WTC11 (cell line): ENCODE measurements at regions of chr6 and their contacts with region 1.

Region 1: GRCh38 chr6:143026696-143027449 is 33.8 kb upstream of the AIG1 start:
- DNase-seq: peak; percentile 62
- ATAC-seq: peak; percentile 93
- H3K4me3 Mint-ChIP-seq: no peak overlapping the region
- H3K27ac Mint-ChIP-seq: no peak overlapping the region
- H3K4me1 Mint-ChIP-seq: no peaks in the 10 kb centered on the region
- H3K27me3 Mint-ChIP-seq: no peaks in the 10 kb centered on the region
- CTCF ChIP-seq: peak; percentile 36; the same call in 1 of the 2 replicates

Region 2: DNA sequence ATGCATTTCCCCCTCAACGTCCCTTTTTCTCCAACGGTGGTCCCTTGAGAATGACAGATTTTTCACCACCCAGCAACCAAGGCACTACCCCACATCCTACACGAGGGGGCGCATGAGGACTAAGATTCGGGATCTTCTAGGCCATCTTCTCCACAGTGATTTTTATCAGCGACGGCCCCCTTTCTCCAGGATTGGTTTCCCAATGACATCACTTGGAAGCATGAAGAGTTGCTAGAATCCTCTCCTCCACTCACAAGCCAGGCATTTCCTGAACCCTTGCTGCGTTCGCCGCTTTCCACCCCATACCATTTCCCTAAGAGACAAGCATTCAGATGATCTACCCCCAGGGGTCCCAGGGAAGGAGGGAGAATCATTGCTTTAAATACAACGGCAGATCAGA is 333.9 kb before region 1 on chr6:
- CTCF ChIA-PET with region 1: interaction called, 14 read pairs
- POLR2A ChIA-PET with region 1: no interaction called
- DNase-seq: peak; percentile 71
- ATAC-seq: peak; percentile 92
- H3K4me3 Mint-ChIP-seq: peak overlapping the region; percentile 30; the same call in 1 of the 2 replicates
- H3K27ac Mint-ChIP-seq: peak overlapping the region; percentile 39; the same call in 1 of the 2 replicates
- H3K4me1 Mint-ChIP-seq: peaks cover 23% of the 10 kb centered on the region
- H3K27me3 Mint-ChIP-seq: no peaks in the 10 kb centered on the region
- CTCF ChIP-seq: peak; percentile 86

Region 3: DNA sequence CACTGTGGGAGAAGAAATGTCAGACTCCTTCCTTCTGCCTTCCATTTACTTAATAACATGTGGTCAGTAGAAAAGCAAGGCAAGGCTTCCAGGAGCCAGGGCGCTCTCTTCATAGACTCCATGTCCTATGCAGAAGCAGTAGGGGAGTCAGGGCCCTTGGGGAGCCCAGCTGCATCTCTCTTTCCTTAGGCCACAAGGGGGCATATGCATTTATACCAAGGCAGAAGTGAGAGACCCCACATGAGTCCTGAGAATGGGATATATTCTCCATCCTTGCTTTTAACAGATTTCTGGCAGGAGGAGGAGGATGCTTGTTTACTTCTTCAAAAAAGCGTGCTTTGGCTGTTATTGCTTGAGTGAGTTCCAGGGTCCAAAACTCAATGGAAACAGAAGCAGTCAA is 280.3 kb before region 1 on chr6:
- CTCF ChIA-PET with region 1: interaction called, 18 read pairs
- POLR2A ChIA-PET with region 1: no interaction called
- DNase-seq: peak; percentile 59
- ATAC-seq: peak; percentile 99
- H3K4me3 Mint-ChIP-seq: no peak overlapping the region
- H3K27ac Mint-ChIP-seq: no peak overlapping the region
- H3K4me1 Mint-ChIP-seq: peaks cover 9% of the 10 kb centered on the region; the same call in 1 of the 2 replicates
- H3K27me3 Mint-ChIP-seq: no peaks in the 10 kb centered on the region
- CTCF ChIP-seq: no peak